MCF 10A (cell line): ENCODE measurements at regions of chr10 and their contacts with region 1.

Region 1: DNA sequence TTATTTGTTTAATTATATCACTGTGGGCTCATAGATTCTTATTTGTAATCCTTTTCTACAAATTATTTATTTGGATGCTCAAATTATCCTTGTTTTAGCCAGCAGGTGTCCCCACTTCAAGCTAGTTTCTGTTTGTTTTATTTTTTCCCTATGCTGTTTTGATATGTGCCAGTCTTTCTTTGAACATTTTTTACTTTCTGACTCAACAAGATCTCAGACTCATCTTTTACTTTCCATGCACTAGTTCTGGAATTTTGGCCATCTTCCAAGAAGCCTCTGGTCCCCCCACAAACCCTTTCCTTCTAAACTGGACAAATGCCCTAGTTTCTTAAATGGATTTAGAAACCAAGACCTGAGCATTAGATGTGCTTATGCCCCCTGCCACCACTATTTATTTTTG is 11.5 kb upstream of the MRPS16 start:
- DNase-seq: peak; percentile 38
- H3K4me3 Mint-ChIP-seq: no peak overlapping the region
- H3K27ac Mint-ChIP-seq: peak overlapping the region; percentile 68
- H3K4me1 Mint-ChIP-seq: peaks cover 16% of the 10 kb centered on the region
- H3K27me3 Mint-ChIP-seq: no peaks in the 10 kb centered on the region
- CTCF ChIP-seq: peak; percentile 41

Region 2: DNA sequence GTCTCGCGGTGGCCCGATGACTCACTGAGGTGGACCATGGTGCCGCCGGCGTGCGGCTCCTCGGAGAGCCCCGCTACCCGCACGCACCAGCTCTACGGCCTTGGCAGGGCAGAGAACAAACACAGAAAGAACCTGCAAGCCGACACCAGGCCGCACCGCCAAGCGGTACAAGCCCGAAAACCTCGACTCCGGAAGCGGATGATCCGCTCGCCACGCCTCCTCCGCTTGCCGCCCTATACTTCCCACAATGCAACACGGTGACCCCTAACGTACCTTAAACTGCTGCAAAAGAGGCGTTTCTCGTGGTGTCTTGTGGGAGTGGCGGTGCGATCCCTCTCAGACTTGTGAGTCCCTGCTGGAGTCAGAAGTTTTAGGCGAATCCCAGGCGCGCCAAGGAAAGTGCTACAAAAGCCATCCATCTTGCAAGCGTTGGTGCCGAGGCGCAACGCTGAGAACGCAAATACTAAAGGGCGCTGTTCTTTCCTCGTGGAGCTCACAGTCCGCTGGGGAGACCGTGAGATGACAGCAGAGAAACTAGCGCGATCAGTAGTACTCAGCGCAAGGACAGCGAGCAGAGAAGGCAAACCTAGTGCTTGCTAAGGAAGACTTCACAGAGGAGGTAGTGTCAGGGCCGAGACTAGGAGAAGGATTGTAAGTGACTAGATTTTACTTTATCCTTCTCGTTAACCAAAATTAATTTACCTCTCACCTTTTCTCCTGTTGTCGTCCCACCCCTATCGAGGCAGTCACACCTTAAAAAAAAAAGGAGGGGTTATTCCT is 11.3 kb before region 1 on chr10 and contains the start of gene MRPS16:
- CTCF ChIA-PET with region 1: interaction called, 8 read pairs
- POLR2A ChIA-PET with region 1: interaction called, 64 read pairs
- intact Hi-C with region 1: no loop called
- DNase-seq: peak; percentile 98
- H3K4me3 Mint-ChIP-seq: peak within 1 kb of the TSS; percentile 90
- H3K27ac Mint-ChIP-seq: peak within 1 kb of the TSS; percentile 94
- H3K4me1 Mint-ChIP-seq: peaks cover 9% of the 10 kb centered on the region
- H3K27me3 Mint-ChIP-seq: no peaks in the 10 kb centered on the region
- CTCF ChIP-seq: no peak
- total RNA-seq, gene MRPS16: 203 and 247 TPM in 2 replicates

Region 3: DNA sequence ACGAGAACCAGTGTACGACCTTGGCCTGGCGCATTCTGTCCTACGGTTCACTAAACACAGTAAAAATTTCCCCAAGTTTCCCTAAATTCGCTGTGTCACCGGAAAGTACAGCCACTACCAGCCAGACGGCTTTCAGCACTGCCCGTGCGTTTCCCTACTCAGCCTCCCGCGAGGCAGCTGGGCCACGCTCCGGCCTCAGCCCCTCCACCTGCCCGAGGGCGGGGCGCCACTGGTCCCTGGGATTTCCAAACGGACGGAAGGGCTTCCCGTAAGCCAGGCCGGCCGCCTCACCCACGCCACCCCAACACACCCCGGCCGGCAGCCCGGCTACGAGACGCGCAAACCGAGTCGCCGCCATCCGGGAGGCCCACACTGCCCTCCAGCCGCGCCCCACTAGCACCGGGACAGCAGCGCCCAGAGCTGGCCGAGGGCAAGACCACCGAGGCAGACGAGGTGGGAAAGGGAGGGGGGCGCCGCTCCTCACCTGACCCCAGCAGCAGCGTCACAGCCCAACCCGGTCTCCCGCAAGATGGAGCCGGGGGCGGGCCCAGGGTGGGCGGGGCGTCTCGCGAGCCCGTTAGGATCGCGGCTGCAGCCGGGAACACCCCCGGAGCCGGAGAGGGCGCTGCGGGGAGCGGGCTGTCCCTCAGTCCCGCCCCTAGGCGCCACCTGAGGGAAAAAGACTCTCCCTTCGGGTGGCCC is 149.7 kb after region 1 on chr10 and contains the start of gene ANXA7:
- CTCF ChIA-PET with region 1: no interaction called
- POLR2A ChIA-PET with region 1: interaction called, 17 read pairs
- intact Hi-C with region 1: loop called (anchors 5 kb)
- DNase-seq: peak; percentile 91
- H3K4me3 Mint-ChIP-seq: peak within 1 kb of the TSS; percentile 98
- H3K27ac Mint-ChIP-seq: peak within 1 kb of the TSS; percentile 95
- H3K4me1 Mint-ChIP-seq: peaks cover 17% of the 10 kb centered on the region
- H3K27me3 Mint-ChIP-seq: no peaks in the 10 kb centered on the region
- CTCF ChIP-seq: peak; percentile 5
- total RNA-seq, gene ANXA7: 137 and 161 TPM in 2 replicates

Region 4: DNA sequence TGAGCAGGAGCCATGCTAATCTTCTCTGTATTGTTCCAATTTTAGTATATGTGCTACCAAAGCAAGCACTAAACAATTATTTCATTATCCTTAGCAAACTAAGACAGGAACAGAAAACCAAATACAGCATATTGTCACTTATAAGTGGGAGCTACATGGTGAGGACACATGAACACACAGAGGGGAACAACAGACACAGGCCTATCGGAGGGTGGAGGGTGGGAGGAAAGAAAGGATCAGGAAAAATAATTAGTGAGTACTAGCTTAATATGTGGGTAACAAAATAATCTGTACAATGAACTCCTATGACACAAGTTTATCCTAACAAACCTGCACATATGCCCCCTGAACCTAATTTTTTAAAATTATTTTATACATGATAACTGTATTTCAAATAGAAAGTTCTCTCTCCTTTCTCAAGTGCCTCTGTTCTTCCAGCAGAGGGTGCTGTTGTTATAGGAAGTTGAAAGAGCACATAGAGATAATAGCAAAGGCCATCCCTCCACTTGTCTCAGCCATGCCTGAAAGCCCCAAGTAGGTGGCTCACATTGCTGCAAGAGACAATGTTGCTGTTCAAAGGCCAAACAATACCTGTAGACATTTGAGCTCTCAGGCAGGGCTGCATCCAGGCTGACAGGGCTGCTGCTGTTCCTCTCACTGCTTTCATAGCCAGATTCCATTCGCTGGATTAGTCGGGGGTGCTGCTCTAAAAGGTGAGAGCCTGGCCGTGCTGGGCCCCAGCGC is 265.3 kb after region 1 on chr10:
- CTCF ChIA-PET with region 1: no interaction called
- POLR2A ChIA-PET with region 1: no interaction called
- intact Hi-C with region 1: loop called (anchors 2 kb)
- DNase-seq: peak; percentile 80
- H3K4me3 Mint-ChIP-seq: no peak overlapping the region
- H3K27ac Mint-ChIP-seq: no peak overlapping the region
- H3K4me1 Mint-ChIP-seq: no peaks in the 10 kb centered on the region
- H3K27me3 Mint-ChIP-seq: no peaks in the 10 kb centered on the region
- CTCF ChIP-seq: peak; percentile 87